Posterior vena cava (tissue), 2 donors: ENCODE measurements at regions of chr19 and their contacts with region 1.

Region 1: GRCh38 chr19:29170554-29170953 is 42.4 kb downstream of the UQCRFS1 start:
- DNase-seq: no peak

Region 2: GRCh38 chr19:29128203-29128602 is 42.4 kb before region 1 on chr19:
- intact Hi-C with region 1: loop called in 1 of 2 experiments (anchors 1 kb)
- DNase-seq: no peak